ENCODE measurements at regions of chr11 and their contacts with region 1.

Region 1: DNA sequence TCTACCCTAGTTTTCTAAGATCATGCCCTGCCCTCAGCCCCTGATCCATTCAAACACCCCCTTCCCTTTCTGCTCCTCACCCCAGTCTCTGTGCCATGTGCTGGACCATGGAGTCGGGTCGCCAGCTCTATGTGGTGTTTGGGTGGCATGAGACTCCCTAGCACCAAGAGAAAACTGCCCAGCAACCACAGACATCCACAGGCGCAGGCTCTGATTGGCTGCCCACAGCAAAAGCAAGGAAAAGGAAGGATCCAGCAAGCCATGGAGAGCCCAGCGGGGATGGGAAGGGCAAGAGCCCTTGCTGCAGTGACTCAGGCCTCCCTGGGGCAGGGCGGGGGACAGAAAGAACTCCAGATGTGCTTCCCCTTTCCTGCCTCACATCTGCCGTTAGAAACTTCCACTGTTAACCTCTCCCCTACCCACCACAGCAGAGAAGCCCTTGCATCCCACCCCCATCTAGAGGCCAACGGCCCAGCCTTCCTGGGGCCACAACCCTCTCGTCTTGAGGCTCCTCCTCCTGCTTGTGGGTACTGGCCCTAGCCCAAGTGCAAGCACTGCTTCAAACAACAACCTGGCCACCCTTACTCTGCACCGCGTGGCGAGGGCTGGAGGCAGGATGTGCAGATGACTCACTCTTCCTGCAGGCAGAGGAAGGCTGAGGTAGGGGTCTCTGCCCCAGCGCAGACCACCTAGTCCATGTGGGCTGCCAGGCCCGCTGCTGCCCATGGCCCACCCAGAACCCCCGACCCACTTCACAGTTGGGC is 9.7 kb upstream of the AHNAK start:
- DNase-seq: peak; percentile 93
- ATAC-seq: peak; percentile 74 to 77

Region 2: DNA sequence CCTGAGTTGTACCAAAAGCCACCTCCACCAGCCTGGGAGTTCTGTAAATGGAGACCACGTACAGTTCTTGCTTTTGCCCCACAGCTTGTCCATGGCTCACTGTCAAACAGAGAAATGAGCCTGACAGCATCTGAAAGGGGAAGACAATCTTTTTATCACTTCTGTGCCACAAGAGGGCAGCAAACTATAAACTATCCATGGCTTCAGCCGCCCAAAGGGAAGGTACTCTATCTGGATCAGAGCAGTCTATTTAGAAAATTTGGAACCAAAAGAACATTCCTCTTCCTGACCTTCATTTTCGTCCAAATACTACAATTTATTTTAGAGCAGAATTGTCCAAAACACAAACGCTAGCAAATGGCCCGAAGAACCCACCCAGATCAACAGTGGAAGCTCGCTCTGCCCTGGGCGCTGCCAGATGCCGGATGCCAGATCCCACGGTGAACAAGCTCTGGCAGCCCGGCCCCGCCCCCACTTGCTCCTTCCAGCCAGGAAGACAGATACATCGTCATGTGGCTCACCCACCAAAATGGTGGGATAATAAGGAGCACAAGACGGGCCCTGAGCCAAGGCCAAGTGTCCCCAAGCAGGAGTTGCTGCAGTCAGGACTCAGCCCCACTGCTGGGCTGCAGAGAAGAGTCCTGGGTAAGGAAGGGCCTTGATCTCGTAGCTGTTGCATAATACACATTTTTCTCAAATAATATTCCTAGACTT is 161.3 kb before region 1 on chr11:
- intact Hi-C with region 1: loop called in 1 of 2 experiments (anchors 5 kb)
- DNase-seq: peak; percentile 88
- ATAC-seq: peak; percentile 75 to 80

Region 3: DNA sequence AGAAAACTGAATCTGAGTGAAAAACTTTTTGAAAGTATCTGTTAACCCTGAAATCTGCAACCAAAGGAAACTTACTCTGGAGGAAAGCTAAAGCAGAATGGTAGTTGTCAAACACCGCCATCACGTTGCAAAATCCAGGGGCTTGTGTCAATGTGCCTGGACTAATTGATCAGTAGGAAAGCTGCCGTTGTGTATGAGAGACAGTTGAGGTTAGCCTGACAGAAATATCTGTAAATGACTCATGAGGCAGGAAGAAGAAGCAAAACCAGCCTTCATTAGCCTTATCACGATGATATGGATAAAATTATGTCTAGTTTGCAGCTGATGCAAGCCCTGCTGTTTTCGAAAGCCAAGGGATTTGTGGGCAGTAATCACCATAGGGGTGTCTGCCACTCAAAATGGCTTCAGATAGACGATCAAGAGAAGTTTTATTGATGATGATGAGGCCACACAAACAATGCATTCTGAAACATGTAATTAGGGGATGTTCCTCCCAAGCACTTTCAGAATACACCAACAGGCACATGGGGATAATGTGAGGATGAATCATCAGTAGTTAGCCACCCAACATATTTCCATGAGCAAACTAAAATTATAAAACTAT is 128.6 kb before region 1 on chr11:
- intact Hi-C with region 1: loop called in 1 of 2 experiments (anchors 2 kb)
- DNase-seq: no peak
- ATAC-seq: peak in 1 of 2 donors; percentile 34

Region 4: DNA sequence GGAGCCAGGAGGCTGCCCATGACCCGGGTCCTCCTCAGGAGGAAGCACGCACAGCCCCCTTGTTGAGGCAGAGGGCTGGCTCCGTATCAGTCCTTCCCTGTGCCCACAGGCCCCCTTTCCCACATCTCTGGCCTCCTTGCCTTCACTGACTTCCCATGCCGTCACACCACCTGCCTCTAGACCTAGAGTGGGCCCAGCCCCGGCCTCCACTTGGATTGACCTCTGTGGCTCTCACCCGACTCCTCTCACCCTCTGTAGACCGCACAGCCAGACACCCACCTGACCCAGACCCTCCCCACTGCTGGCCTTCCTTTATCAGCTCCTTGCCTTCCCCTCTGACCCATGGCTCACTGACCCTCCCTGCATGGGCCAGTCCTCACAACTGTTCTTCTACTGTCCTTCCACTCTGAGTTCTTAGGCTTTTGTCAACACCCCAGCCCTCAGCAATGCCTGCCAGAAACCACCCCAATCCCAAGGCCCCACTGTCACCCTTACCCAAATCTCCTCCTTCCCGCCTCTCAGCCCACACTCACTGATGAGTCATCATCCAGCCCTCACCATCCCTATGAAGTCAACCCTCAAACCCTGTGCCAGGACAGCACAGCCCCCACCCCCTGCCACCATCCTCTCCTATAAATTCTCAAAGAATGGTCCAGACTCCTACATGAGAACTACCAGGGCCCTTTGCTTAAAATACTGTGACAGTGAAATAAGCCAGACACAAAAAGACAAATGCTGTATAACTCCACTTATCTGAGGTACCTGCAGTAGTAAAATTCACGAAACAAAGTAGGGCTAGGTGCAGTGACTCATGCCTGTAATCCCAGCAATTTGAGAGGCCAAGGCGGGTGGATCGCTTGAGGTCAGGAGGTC is 84.0 kb before region 1 on chr11:
- intact Hi-C with region 1: no loop called
- DNase-seq: no peak
- ATAC-seq: peak; percentile 57 to 91

Measured in left cardiac atrium (tissue), 4 donors.